ENCODE measurements at regions of chr5 and their contacts with region 1.

Region 1: GRCh38 chr5:107705402-107706014 is 34.8 kb upstream of the EFNA5 start:
- DNase-seq: no peak
- ATAC-seq: no peak
- H3K4me3 ChIP-seq: no peak overlapping the region
- H3K27ac ChIP-seq: no peak overlapping the region
- H3K4me1 ChIP-seq: no peaks in the 10 kb centered on the region
- H3K27me3 ChIP-seq: no peaks in the 10 kb centered on the region
- CTCF ChIP-seq: no peak
- POLR2A ChIP-seq: no peak

Region 2: DNA sequence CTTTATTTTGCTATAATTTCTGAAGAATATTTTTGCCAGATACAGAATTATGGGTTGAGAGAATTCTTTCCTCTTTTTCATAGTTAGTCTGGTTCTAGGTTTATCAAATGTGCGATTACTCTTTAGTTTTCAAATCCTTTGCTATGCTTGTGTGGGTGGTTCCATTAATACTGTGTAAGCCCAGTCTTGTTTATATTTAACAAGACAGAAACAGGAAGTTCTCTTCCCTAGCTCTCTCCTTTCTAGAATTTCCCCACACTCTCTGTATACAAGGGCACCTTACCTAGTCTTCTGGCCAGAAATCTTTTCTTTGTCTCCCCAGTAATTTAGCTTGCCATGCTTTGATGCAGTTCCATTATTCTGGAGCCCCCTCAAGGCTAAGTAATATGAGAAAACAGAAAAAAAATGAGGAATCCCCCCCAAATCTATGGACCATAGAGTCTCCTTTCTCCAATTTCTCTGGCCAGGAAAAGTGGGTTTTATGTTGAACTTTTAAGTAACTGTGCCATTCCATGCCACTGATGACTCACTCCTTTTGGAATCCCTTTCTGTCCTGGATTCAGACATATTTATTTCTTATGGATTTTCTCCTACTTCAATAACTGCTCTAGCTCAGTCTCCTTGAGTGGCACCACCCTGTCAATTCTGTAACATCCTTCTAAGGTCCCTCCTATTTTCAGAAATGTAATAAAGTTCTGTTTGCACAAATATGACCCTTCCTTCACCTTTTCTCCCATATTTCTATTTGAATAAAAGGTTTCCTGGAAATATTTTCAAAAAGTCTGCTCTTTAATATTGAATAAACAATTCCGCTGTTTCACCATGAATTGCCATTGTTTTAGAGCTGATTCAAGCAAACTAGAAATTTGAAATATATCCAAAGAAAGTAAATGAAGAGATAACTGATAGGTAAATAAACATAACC is 1748.8 kb before region 1 on chr5:
- in situ Hi-C with region 1: no loop called
- intact Hi-C with region 1: loop called (anchors 5 kb)
- DNase-seq: no peak
- ATAC-seq: no peak
- H3K4me3 ChIP-seq: no peak overlapping the region
- H3K27ac ChIP-seq: no peak overlapping the region
- H3K4me1 ChIP-seq: no peaks in the 10 kb centered on the region
- H3K27me3 ChIP-seq: no peaks in the 10 kb centered on the region
- CTCF ChIP-seq: no peak
- POLR2A ChIP-seq: no peak

Region 3: GRCh38 chr5:107808671-107809137 is 103.2 kb after region 1 on chr5:
- in situ Hi-C with region 1: no loop called
- intact Hi-C with region 1: no loop called
- DNase-seq: no peak
- ATAC-seq: no peak
- H3K4me3 ChIP-seq: no peak overlapping the region
- H3K27ac ChIP-seq: no peak overlapping the region
- H3K4me1 ChIP-seq: no peaks in the 10 kb centered on the region
- H3K27me3 ChIP-seq: no peaks in the 10 kb centered on the region
- CTCF ChIP-seq: no peak
- POLR2A ChIP-seq: no peak

Measured in gastrocnemius medialis (tissue), 4 donors.